ENCODE measurements at regions of chr10 and their contacts with region 1.

Region 1: DNA sequence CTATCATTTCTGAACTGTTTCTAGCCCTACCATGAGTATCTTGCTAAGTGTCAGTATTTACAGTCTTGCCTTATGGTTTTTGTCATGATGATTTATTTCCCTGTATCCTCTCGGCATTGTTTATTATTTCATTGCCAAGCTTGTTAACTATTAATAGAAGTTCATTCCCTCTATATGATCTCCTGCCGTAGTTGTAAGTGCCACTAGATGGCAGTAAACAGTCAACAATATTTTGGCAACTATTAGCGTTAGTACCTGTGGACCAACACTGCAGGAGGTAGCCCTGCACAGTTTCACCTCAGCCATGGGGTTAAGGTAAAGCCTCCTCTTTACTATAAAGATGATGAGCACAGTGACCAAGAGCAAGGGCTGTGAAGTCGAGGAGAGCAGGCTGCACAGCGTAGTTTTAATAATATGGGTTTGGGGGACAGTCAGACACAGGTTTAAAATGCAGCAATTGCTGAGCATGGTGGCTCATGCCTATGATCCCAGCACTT is 26.1 kb upstream of the CCNJ start:
- DNase-seq: no peak
- H3K4me3 ChIP-seq: no peak overlapping the region
- H3K27ac ChIP-seq: no peak overlapping the region
- H3K4me1 ChIP-seq: peaks cover 0 to 7% (median 4%) of the 10 kb centered on the region in 6 donors
- H3K27me3 ChIP-seq: no peaks in the 10 kb centered on the region
- CTCF ChIP-seq: peak; percentile 57 to 80 (median 77)
- POLR2A ChIP-seq: no peak

Region 2: GRCh38 chr10:96319754-96320474 is 302.7 kb after region 1 on chr10:
- intact Hi-C with region 1: loop called (anchors 10 kb)
- DNase-seq: no peak
- H3K4me3 ChIP-seq: no peak overlapping the region
- H3K27ac ChIP-seq: no peak overlapping the region
- H3K4me1 ChIP-seq: no peaks in the 10 kb centered on the region
- H3K27me3 ChIP-seq: peaks cover 0 to 4% (median 0%) of the 10 kb centered on the region in 7 donors
- CTCF ChIP-seq: no peak
- POLR2A ChIP-seq: no peak